ENCODE measurements at regions of chr20 and their contacts with region 1.

Region 1: DNA sequence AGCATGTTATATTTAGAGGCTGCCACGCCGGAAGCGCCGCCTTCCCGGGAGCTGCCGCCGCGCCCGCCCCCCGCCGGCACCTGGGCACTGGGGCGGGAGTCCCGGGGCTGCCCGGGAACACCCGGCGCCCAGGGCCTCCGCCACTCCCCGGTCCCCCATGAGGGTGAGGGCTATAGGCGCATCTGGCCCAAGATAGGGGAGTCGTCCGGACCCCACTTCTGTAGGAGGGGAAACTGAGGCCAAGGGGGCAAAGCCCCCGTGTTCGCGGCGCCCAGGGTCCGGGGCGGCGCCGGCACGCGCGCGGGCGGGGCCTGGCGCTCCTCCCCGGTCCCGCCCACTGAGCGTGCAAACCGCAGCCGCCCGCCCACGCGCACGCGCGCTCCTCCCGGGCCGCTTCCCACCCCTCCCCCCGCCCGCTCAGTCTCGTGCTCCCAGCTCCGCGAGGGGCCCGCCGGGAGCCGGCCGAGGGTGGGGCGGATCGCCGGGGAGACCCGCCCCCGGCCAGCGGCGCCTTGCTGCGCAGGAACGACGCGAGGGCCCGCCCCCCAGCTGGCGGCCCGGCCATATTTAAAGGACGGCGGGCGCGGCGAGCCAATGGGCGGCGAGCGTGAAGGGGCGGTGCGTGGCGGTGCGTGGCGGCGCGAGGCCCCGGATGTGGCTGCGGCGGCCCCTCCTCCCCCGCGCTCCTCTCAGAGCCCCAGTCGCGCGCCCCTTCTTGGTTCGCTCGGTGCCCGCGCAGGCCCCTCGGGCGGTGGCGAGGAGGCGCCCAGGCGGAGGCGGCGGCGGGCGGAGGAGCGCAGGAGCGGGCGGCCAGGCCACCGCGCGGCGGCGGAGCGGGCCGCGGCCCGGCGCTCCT is at the start of gene LSM14B:
- DNase-seq: peak; percentile 96
- ATAC-seq: peak; percentile 84
- H3K4me3 Mint-ChIP-seq: peak within 1 kb of the TSS; percentile 78
- H3K27ac Mint-ChIP-seq: peak within 1 kb of the TSS; percentile 94
- H3K4me1 Mint-ChIP-seq: peaks cover 50% of the 10 kb centered on the region
- H3K27me3 Mint-ChIP-seq: no peaks in the 10 kb centered on the region
- CTCF ChIP-seq: no peak
- total RNA-seq, gene LSM14B: 33.5 to 35.6 TPM

Region 2: DNA sequence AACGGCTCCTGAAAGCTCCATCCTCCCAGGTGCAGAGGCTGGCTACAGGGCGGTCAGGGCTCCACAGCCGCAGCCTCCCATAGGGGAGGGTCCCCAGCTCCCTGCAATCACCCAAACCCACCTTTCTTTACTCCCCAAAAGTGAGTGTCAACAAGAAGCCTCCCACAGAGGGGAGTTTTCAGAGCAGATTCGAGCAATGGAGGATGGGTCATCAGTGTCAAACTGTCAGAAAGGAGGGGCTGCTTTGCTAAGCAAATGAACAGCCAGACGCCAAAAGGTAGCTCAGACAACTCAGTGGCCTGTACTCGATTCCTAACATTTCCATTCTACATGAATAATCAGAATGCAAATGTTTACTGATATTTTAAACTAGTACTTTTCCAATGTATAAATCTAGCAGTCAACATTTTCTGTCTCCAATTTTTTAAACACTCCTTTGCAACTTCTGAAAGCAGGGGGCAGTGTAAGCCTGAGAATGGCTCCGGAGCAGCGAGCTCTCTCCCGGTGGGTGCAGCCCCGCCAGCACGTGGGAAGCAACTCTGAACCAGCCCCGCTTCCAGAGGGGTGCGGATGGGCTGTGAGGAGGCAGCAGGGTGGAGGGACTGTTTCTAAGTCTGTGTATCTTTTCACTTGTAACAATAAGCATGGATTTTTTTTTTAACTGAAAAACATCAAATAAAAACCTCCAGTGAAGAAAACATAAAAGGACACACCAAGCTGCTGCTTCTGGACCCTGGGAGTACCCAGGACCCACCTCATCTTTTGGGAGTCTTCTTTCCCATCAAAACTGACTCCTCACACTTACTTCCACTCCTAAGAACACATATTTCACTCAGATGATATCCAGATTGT is 111.2 kb before region 1 on chr20:
- CTCF ChIA-PET with region 1: interaction called, 10 read pairs
- POLR2A ChIA-PET with region 1: interaction called, 5 read pairs
- intact Hi-C with region 1: no loop called
- DNase-seq: peak; percentile 73
- ATAC-seq: peak; percentile 83
- H3K4me3 Mint-ChIP-seq: no peak overlapping the region
- H3K27ac Mint-ChIP-seq: no peak overlapping the region
- H3K4me1 Mint-ChIP-seq: peaks cover 9% of the 10 kb centered on the region
- H3K27me3 Mint-ChIP-seq: no peaks in the 10 kb centered on the region
- CTCF ChIP-seq: peak; percentile 88

Region 3: DNA sequence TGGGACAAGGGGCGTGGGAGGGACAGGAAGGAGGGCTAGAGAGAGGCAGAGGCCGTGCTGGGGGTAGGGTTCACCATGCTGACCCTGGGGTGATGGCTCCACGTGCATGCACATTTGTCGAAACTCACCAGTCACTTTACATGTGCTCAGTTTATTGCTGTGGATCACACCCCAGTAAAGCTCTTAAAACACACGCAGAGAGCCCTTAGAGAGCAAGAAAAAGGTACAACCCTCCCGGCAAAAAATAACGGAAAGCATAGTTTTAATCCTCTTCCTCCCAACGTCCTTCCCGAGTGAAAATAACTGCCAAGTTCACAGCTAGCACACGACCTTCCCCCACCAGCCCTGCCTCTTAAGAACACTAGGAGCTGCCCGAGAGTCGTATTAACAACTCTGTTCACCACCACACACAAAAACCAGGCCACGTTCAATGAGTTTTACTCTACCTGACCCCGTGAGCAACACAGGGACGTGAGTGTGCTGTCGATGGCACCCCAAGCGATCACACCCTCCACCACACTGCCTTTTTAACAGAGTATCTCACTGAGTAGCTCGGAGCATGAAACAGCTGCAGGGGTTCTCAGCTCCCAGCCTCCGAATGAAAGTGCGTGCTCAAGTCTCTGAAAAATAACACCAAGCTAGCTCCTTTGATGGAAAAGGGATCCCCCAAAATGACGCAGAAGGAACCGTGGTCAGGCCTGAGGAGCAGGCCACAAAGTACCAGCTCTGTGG is 96.0 kb before region 1 on chr20:
- CTCF ChIA-PET with region 1: interaction called, 6 read pairs
- POLR2A ChIA-PET with region 1: no interaction called
- intact Hi-C with region 1: loop called (anchors 10 kb)
- DNase-seq: peak; percentile 48
- ATAC-seq: peak; percentile 85
- H3K4me3 Mint-ChIP-seq: no peak overlapping the region
- H3K27ac Mint-ChIP-seq: peak overlapping the region; percentile 14
- H3K4me1 Mint-ChIP-seq: peaks cover 37% of the 10 kb centered on the region
- H3K27me3 Mint-ChIP-seq: no peaks in the 10 kb centered on the region
- CTCF ChIP-seq: peak; percentile 33

Region 4: DNA sequence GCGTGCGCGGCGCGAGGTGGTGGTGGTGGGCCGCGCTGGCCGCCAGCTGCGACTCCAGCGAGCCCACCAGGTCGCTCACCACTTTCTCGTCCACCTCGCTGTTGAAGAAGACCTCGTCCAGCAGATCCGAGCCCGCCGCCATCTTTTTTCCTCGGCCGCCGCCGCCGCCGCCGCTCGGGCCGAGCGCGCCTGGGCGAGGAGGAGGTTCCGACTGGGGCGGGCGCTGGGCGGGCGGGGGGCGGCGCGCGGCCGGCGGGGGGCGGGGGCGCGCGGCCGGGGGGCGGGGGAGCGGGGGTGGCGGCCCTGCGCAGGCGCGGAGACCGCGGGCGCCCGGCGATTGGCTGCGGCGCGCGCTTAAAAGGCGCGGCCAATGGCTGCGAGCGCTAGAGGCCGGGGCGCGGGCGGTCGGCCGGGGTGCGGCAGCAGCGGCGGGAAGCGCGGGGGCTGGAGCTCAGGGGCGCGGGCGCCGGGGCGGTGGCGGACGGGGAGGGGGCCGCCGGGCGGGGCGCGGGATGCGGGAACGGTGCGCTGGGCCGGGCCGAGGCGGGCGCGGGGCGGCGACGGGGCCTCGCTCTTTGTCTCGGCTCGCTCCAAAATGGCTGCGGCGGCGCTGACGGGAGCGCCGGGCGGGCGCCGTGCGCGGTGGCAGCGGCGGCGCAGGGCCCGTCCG is 56.2 kb before region 1 on chr20 and contains the start of gene TAF4:
- CTCF ChIA-PET with region 1: interaction called, 5 read pairs
- POLR2A ChIA-PET with region 1: interaction called, 27 read pairs
- intact Hi-C with region 1: loop called (anchors 5 kb)
- DNase-seq: peak; percentile 71
- ATAC-seq: peak; percentile 80
- H3K4me3 Mint-ChIP-seq: peak within 1 kb of the TSS; percentile 79
- H3K27ac Mint-ChIP-seq: peak within 1 kb of the TSS; percentile 81
- H3K4me1 Mint-ChIP-seq: peaks cover 47% of the 10 kb centered on the region
- H3K27me3 Mint-ChIP-seq: no peaks in the 10 kb centered on the region
- CTCF ChIP-seq: no peak
- total RNA-seq, gene TAF4: 14.1 to 15.9 TPM

Region 5: GRCh38 chr20:62136283-62137091 is 14.5 kb after region 1 on chr20:
- CTCF ChIA-PET with region 1: interaction called, 28 read pairs
- POLR2A ChIA-PET with region 1: interaction called, 13 read pairs
- intact Hi-C with region 1: no loop called
- DNase-seq: peak; percentile 84
- ATAC-seq: peak; percentile 63
- H3K4me3 Mint-ChIP-seq: no peak overlapping the region
- H3K27ac Mint-ChIP-seq: peak overlapping the region; percentile 64
- H3K4me1 Mint-ChIP-seq: peaks cover 47% of the 10 kb centered on the region
- H3K27me3 Mint-ChIP-seq: no peaks in the 10 kb centered on the region
- CTCF ChIP-seq: peak; percentile 87

Region 6: DNA sequence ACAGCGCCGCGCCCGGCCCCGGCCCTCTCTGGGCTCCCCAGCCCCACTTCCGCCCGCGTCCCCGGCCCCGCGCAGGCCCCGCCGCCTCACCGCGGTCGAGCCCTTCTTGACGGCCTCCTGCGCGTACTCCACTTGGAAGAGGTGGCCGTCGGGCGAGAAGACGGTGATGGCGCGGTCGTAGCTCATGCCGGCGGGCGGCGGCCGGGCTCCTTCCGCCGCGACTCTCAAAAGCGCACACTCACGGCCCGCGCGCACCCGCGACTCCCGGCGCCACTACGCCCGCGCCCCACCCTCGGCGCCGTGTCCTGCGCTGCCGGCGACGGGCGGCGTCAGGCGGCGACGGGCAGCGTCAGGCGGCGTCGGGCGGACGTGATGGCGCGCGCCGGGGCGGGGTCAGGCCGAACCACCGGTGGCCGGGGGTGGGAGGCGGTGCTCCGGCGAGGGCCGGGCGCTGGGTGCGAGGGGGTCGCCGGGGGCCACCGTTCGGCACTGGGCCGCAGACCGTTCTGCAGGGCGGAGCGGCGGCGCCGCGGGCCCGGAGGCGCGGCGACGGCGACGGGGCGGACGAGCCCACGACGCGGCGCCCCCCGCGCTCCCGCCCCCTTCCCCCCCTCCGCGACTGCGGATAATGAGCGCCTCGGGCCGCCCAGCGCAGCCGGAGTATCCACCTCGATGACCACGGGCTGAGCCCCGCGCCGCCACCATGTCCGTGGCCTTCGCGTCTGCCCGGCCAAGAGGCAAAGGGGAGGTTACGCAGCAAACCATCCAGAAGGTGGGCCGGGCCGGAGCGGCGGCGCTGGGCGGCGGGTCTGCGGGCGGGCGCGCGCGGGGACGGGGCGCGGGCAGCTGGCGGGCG is 21.3 kb after region 1 on chr20 and contains the starts of genes PSMA7 and SS18L1:
- CTCF ChIA-PET with region 1: interaction called, 7 read pairs
- POLR2A ChIA-PET with region 1: interaction called, 13 read pairs
- intact Hi-C with region 1: no loop called
- DNase-seq: peak; percentile 85
- ATAC-seq: peak; percentile 90
- H3K4me3 Mint-ChIP-seq: peak within 1 kb of the TSS; percentile 84
- H3K27ac Mint-ChIP-seq: peak within 1 kb of the TSS; percentile 89
- H3K4me1 Mint-ChIP-seq: peaks cover 47% of the 10 kb centered on the region
- H3K27me3 Mint-ChIP-seq: no peaks in the 10 kb centered on the region
- CTCF ChIP-seq: no peak
- total RNA-seq, gene PSMA7: 286 to 289 TPM
- total RNA-seq, gene SS18L1: 15.3 to 16.1 TPM